ENCODE measurements at regions of chrX and their contacts with region 1.

Region 1: DNA sequence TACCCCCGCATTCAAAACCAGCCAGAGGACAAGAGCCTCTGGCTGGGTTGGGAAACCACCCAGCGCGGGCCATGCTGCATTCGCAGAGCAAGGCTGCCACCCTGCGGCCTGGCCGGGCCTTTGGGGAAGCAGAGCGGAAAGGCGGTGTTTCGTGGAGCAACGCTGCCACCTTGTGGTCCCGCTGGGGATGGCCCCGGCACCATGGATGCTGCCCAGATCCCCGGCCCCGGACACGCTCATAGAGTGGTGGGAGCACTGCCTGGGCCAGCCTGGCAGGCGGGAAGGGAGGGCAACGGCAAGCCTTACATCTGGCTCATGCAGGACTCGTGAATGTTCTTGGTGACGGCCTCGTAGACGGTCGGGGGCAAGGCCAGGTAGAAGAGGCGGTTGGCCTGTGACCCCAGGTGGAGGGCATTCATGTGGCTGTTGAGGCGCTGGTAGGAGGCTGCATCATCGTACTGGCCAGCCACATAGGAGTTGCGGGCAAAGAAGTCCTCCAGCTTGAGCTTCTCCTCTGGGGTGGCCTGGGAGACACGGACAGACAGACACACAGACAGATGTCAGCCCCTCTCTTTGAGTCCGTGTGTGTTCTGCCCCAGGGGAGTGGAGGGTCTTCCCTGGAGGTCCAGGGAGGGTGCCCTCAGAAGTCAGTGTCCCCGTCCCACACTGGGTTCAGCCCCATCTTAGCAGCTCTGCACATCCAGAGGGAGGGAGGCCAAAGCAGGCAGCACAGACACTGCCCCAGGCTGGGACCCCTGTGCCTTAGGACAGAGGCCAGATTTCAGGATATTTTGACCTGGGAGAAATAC is 11.6 kb downstream of the G6PD start:
- DNase-seq: peak; percentile 94
- ATAC-seq: peak; percentile 93

Region 2: DNA sequence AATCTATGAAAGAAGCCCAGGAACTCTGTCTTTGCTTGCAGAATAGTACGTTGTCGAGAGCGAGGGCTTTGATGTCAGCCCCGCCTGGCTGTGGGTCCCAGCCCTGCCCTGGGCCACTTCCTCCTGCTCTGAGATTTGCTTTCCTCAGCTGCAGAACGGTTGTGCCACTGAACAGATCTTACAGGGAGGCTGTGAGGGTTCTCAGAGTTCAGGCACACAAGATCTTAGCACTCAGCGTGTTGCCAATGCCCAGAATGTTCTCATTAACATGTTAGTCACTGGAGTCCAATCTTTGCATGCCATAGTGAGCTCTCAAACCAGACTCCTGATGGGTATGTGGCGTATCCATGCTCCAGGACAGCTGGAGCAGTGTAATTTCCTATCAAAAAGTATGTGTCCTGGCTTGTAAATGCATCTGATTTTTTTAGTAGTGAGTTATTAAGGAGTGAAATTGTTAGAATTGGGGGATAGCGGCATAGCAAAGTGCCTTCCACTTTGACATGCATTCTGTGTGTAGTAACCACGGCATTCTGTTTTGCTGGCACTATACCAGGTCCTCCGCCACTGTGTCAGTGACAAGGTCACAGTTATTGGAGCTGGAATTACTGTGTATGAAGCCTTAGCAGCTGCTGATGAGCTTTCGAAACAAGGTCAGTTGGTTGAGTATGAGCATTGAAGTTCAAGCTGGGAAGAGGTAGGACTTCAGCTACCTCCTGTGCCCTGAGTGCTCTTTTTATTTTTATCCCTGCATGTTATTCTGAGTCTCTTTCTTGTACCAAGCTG is 207.8 kb before region 1 on chrX:
- intact Hi-C with region 1: loop called (anchors 5 kb)
- DNase-seq: no peak
- ATAC-seq: peak; percentile 68

Region 3: GRCh38 chrX:154490414-154491083 is 44.5 kb before region 1 on chrX and contains the start of gene SLC10A3:
- intact Hi-C with region 1: no loop called
- DNase-seq: peak; percentile 96
- ATAC-seq: peak; percentile 94
- total RNA-seq, gene SLC10A3: 13.0 TPM

Region 4: GRCh38 chrX:154695911-154696675 is 161.0 kb after region 1 on chrX:
- intact Hi-C with region 1: no loop called
- DNase-seq: no peak
- ATAC-seq: no peak

Measured in Right ventricle myocardium inferior (tissue), 1 donor.